ENCODE measurements at regions of chrX and their contacts with region 1.

Region 1: GRCh38 chrX:100649550-100650356 is 5.8 kb downstream of the SRPX2 start:
- DNase-seq: peak; percentile 70
- H3K4me3 ChIP-seq: no peak overlapping the region
- H3K27ac ChIP-seq: peak overlapping the region; percentile 75
- H3K4me1 ChIP-seq: peaks cover 8% of the 10 kb centered on the region
- H3K27me3 ChIP-seq: no peaks in the 10 kb centered on the region
- CTCF ChIP-seq: no peak

Region 2: GRCh38 chrX:100717363-100717762 is 67.6 kb after region 1 on chrX:
- CTCF ChIA-PET with region 1: no interaction called
- POLR2A ChIA-PET with region 1: interaction called, 5 read pairs
- intact Hi-C with region 1: loop called (anchors 10 kb)
- DNase-seq: no peak
- H3K4me3 ChIP-seq: no peak overlapping the region
- H3K27ac ChIP-seq: no peak overlapping the region
- H3K4me1 ChIP-seq: no peaks in the 10 kb centered on the region
- H3K27me3 ChIP-seq: peaks cover 6% of the 10 kb centered on the region
- CTCF ChIP-seq: no peak

Region 3: DNA sequence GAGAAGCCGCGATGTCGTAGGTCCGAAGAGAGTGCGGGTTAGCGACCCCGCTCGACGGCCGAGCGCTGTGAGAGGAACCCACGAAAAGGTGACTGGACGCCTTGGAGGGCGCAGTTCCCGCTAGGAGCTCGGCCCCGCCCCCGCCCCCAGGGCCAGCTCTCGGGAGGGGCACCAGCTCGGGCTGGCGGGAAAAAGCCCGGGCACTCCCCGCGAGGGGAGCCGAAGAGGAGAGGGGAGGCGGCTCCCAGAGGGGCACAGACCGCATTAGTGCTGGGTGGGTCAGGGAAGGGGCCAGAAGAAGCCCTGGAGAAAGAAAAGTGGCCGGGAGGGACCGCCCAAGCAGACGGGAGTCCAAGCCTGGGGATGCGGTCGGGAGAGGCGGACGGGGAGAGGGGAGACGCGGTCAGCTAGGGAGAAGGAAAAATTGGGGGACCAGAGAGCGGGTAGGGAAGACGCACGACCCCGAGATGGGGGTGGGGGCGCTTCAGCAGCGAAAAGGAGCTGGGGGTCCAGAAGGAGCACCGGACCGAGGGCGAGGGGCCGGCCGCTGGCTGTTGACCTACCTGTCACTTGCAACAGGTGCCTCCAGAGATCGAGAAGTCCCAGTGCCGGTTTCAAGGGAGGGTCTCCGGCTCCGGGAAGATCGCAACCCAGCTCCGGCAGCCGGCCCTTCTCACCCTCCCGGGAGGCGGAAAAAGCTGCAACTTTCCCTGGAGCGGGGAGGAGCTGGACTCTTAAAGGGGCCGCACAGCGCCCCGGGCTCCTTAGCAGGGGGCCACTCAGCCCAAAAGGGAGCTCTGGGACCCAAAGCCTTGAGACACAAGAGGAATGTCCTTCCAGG is 81.9 kb after region 1 on chrX and contains the start of gene SYTL4:
- CTCF ChIA-PET with region 1: no interaction called
- POLR2A ChIA-PET with region 1: no interaction called
- intact Hi-C with region 1: no loop called
- DNase-seq: peak; percentile 8
- H3K4me3 ChIP-seq: peak within 1 kb of the TSS; percentile 52
- H3K27ac ChIP-seq: no peak within 1 kb of the TSS
- H3K4me1 ChIP-seq: no peaks in the 10 kb centered on the region
- H3K27me3 ChIP-seq: no peaks in the 10 kb centered on the region
- CTCF ChIP-seq: no peak
- total RNA-seq, gene SYTL4: 2.3 and 3.2 TPM in 2 replicates